ENCODE measurements at regions of chr3 and their contacts with region 1.

Region 1: GRCh38 chr3:9986237-9986725 is 360 bp downstream of the EMC3 start:
- DNase-seq: no peak
- H3K4me3 Mint-ChIP-seq: peak overlapping the region; percentile 97
- H3K27ac Mint-ChIP-seq: peak overlapping the region; percentile 99
- H3K4me1 Mint-ChIP-seq: peaks cover 39% of the 10 kb centered on the region
- H3K27me3 Mint-ChIP-seq: no peaks in the 10 kb centered on the region

Region 2: GRCh38 chr3:9843715-9844438 is 142.4 kb before region 1 on chr3 and contains the start of gene RPUSD3:
- CTCF ChIA-PET with region 1: no interaction called
- intact Hi-C with region 1: loop called (anchors 2 kb)
- DNase-seq: peak; percentile 98
- H3K4me3 Mint-ChIP-seq: peak within 1 kb of the TSS; percentile 98
- H3K27ac Mint-ChIP-seq: peak within 1 kb of the TSS; percentile 89
- H3K4me1 Mint-ChIP-seq: peaks cover 30% of the 10 kb centered on the region
- H3K27me3 Mint-ChIP-seq: no peaks in the 10 kb centered on the region
- total RNA-seq, gene RPUSD3: 82.0 to 83.7 TPM

Region 3: DNA sequence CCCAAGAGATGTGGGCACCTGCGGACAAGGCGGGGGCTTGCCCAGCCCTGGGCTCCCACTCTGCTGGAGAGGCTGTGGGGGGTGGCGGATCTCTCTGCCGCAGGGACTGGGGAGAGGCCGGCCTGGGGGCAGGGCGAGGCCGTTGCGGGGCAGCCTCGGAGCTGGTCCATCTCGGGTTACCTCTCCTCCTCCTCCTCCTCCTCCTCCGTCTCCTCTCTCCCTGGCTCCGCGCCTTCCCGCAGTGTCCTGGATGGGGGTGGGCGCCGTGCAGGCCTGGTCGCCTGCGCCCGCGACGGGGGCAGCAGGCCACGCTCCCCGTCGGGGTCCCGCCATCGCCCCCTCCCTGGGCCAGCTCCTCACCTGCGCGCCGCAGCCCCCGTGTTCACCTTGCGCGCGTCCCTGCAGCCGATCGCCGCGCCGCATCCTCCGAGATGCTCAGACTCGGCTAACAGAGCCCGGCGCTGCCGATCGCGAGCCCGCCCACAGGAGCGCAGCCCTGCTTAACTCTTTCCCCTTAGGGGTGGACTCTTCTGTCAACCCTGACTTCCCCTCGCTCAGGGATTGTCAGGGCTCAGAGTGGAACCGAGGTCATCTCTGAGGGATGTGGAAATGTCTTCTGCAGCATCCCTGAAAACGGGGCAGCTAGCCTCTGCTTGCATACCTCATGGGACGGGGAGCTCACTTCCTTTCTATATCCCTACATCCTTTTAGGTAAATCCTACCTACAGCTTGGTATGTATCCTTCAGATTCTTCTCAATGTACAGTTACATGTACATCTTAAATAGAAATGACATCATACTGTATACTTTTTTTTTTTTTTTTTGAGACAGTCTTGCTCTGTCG is 34.1 kb before region 1 on chr3 and contains the start of gene PRRT3:
- CTCF ChIA-PET with region 1: interaction called, 3 read pairs
- intact Hi-C with region 1: loop called (anchors 1 kb)
- DNase-seq: peak; percentile 77
- H3K4me3 Mint-ChIP-seq: peak within 1 kb of the TSS; percentile 81
- H3K27ac Mint-ChIP-seq: peak within 1 kb of the TSS; percentile 86
- H3K4me1 Mint-ChIP-seq: peaks cover 16% of the 10 kb centered on the region
- H3K27me3 Mint-ChIP-seq: no peaks in the 10 kb centered on the region
- total RNA-seq, gene PRRT3: 5.8 to 6.7 TPM

Region 4: GRCh38 chr3:10010486-10011465 is 24.5 kb after region 1 on chr3:
- CTCF ChIA-PET with region 1: no interaction called
- intact Hi-C with region 1: loop called (anchors 2 kb)
- DNase-seq: peak; percentile 85
- H3K4me3 Mint-ChIP-seq: peak overlapping the region; percentile 12
- H3K27ac Mint-ChIP-seq: no peak overlapping the region
- H3K4me1 Mint-ChIP-seq: peaks cover 13% of the 10 kb centered on the region
- H3K27me3 Mint-ChIP-seq: peaks cover 6% of the 10 kb centered on the region

Measured in activated naive CD4-positive, alpha-beta T cell treated with anti-CD3 and anti-CD28 coated beads for 36 hours (primary cell).